ENCODE measurements at regions of chr5 and their contacts with region 1.

Region 1: DNA sequence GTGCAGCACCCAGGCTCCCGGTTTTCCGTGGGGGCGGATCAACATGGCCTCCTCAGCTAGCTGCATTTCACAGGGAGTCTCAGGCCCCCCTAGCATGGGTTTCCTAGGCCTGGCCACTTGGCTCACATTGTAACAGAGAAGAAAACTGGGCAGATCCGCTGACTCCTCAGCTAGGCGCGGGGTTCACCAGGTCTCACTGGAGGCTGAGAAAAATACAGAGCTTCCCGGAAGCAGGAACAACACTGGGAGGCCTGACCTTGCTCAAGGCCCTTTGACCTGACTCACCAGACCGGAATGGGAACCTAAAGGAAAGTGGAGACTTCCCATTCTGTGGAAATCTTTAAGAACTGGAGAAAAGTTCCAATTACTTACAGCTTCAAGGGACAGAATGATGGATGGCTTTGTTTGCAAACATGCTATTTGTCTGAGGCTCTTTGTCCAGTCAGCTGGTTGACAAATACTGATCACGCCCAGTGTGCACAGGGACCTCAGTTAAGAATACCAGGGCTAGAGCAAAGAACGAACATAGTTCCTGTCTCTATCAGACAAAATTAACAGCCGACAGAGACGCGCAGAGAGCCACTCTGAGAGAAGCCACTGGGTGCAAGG is 88.7 kb upstream of the LRRTM2 start:
- DNase-seq: peak; percentile 58
- ATAC-seq: peak; percentile 78
- H3K4me3 ChIP-seq: peak overlapping the region in 1 of 3 experiments; percentile 29; a peak in 1 of 6 replicates
- H3K27ac ChIP-seq: peak overlapping the region; percentile 81
- H3K4me1 ChIP-seq: peaks cover 60% of the 10 kb centered on the region
- H3K27me3 ChIP-seq: no peaks in the 10 kb centered on the region
- CTCF ChIP-seq: no peak
- EP300 ChIP-seq: peak in 1 of 2 experiments; percentile 6; a peak in 1 of 4 replicates
- POLR2A ChIP-seq: no peak
- RAD21 ChIP-seq: no peak

Region 2: GRCh38 chr5:138953387-138954256 is 10.2 kb before region 1 on chr5:
- CTCF ChIA-PET with region 1: no interaction called
- POLR2A ChIA-PET with region 1: interaction called, 25 read pairs
- in situ Hi-C with region 1: no loop called
- intact Hi-C with region 1: no loop called
- DNase-seq: no peak
- ATAC-seq: peak; percentile 28
- H3K4me3 ChIP-seq: no peak overlapping the region
- H3K27ac ChIP-seq: no peak overlapping the region
- H3K4me1 ChIP-seq: peaks cover 32% of the 10 kb centered on the region
- H3K27me3 ChIP-seq: no peaks in the 10 kb centered on the region
- CTCF ChIP-seq: no peak
- EP300 ChIP-seq: no peak
- POLR2A ChIP-seq: no peak
- RAD21 ChIP-seq: no peak

Measured in HepG2 (cell line).